Activated naive CD4-positive, alpha-beta T cell treated with anti-CD3 and anti-CD28 coated beads for 36 hours (primary cell): ENCODE measurements at regions of chrX and their contacts with region 1.

Region 1: DNA sequence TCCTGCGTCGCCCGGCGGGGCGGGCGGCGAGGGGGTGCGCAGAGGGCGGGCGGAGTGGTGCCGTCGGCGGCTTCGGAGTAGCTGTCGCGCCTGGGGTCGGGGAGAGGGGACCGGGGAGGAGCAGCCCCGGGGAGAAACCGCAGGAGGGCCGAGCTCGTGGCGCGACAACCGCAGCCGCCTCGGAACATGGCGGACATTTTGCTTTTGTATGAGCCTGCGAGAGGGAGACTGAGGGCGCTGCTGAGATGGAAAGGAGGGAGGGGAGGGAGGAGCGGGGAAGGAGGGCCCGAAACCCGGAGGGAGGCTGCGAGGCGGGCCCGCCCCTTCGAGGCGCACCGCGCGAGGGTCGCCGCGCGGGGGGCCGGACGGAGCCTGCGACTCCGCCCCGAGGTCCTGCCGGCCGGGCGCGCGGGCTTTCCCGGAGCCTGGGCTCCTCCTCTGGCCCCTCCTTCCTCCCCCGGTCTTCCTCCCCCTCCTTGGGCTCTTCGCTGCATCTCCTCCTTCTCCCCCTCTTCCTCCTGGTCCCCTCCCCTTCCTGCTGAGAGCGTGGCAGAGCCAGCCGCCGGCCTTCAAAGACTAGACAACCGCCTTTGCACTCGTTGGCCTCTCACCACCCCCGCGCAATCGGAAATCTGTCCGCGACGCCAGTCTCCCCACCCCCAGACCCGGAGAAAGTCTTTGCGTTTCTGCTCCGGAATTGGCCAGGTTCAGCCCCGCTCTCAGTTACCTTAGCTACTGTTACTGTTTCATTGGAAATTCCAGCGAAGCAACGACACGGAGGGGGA is 1.1 kb downstream of the INTS6L start:
- DNase-seq: peak; percentile 91
- H3K4me3 Mint-ChIP-seq: peak overlapping the region; percentile 97
- H3K27ac Mint-ChIP-seq: peak overlapping the region; percentile 97
- H3K4me1 Mint-ChIP-seq: peaks cover 38% of the 10 kb centered on the region
- H3K27me3 Mint-ChIP-seq: no peaks in the 10 kb centered on the region

Region 2: DNA sequence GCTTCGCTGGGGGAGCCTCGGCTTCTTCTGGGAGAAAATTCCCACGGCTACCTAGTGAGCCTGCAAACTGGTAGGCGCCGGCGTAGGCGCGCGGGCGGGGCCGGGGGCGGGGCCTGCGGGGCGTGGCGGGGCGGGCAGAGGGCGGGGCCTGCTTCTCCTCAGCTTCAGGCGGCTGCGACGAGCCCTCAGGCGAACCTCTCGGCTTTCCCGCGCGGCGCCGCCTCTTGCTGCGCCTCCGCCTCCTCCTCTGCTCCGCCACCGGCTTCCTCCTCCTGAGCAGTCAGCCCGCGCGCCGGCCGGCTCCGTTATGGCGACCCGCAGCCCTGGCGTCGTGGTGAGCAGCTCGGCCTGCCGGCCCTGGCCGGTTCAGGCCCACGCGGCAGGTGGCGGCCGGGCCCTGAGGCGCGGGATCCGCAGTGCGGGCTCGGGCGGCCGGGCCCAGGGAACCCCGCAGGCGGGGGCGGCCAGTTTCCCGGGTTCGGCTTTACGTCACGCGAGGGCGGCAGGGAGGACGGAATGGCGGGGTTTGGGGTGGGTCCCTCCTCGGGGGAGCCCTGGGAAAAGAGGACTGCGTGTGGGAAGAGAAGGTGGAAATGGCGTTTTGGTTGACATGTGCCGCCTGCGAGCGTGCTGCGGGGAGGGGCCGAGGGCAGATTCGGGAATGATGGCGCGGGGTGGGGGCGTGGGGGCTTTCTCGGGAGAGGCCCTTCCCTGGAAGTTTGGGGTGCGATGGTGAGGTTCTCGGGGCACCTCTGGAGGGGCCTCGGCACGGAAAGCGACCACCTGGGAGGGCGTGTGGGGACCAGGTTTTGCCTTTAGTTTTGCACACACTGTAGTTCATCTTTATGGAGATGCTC is 1061.4 kb before region 1 on chrX and contains the start of gene HPRT1:
- CTCF ChIA-PET with region 1: no interaction called
- intact Hi-C with region 1: loop called (anchors 5 kb)
- DNase-seq: peak; percentile 80
- H3K4me3 Mint-ChIP-seq: peak within 1 kb of the TSS; percentile 85
- H3K27ac Mint-ChIP-seq: peak within 1 kb of the TSS; percentile 85
- H3K4me1 Mint-ChIP-seq: peaks cover 7% of the 10 kb centered on the region
- H3K27me3 Mint-ChIP-seq: no peaks in the 10 kb centered on the region
- total RNA-seq, gene HPRT1: 111 TPM

Region 3: DNA sequence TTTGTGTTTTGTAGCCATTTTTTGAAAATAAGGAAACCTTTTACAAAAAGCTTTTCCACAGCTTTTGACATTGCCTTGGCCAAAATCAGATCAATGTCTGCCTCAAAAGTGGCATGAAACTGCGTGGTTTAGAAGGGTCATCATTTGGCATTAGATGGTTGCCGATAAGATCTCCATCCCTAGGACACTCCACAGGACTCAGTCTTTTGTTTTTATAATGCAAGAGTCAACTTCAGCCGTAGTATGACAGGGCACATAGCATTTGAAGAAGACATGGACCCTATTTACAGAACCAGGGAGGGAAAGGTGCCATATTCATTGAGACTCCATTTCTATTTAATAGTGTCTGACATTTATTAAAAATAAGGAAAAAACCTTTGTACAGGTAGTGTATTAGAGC is 471.0 kb before region 1 on chrX:
- CTCF ChIA-PET with region 1: no interaction called
- intact Hi-C with region 1: loop called (anchors 2 kb)
- DNase-seq: no peak
- H3K4me3 Mint-ChIP-seq: peak overlapping the region; percentile 87
- H3K27ac Mint-ChIP-seq: no peak overlapping the region
- H3K4me1 Mint-ChIP-seq: peaks cover 21% of the 10 kb centered on the region
- H3K27me3 Mint-ChIP-seq: no peaks in the 10 kb centered on the region

Region 4: DNA sequence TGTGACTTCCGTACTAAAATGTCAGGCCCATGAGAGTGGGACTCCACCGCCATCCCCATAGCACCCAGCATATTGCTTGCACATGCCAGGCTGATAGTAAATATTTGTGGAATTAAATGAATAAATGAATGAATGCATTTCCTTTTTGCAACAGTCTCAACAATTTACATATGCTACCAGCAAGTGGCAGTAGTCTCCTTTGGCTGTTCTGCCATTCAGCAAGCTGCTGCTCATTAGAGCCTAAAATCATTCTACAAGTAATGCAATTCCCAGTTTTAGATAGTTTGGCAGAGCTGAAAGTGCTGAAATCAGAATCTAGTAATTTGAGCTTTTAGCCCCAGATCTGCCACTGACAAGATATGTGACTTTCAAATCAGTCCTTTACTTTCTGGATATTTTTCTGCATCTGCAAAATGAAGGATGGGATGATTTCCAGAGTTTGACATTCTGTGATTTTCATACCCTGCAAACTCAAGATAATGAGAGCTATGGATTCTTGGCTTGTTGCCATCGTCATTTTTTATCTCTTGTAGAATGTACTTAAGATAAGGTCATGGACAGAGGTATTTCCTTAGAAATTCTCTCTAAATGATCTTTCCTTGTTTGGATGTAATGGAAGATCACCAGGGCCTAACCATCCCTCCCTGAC is 36.8 kb before region 1 on chrX:
- CTCF ChIA-PET with region 1: no interaction called
- intact Hi-C with region 1: loop called (anchors 1 kb)
- DNase-seq: peak; percentile 20
- H3K4me3 Mint-ChIP-seq: no peak overlapping the region
- H3K27ac Mint-ChIP-seq: no peak overlapping the region
- H3K4me1 Mint-ChIP-seq: peaks cover 3% of the 10 kb centered on the region
- H3K27me3 Mint-ChIP-seq: no peaks in the 10 kb centered on the region

Region 5: DNA sequence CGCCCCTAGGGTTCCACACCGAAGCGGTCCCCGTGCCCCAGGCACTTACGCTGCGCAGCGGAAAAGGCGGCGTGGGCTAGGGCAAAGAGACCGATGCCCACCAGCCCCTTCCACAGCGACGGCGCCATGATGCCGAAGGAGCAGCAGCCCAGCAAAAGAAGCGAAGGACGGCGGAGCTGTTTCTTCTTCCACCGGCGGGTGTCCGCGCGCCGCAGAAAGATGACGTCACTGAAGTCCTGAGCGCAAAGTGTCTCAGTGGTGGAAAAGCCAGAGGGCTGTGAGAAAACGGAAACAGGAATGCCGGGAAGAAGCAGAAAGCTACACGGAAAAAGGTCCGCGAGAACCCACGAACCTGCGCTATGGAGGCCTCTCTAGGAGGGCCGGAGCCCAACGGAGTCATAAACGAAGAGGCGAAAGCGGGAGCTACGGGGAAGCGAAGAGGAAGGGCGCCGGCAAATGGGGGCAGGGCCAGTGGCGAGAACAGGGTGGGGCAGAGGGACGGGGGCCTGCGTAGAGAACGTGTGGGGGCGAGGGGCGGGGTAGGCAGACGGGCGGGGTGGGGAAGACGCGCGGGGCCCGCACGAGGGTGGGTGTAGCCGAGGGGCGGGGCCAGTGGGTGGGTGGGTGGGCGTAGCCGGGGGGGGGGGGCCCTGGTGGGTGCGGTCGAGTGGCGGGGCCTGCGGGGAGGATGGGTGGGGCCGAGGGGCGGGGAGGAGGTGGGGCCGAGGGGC is 452.1 kb after region 1 on chrX and contains the start of gene MMGT1:
- CTCF ChIA-PET with region 1: no interaction called
- intact Hi-C with region 1: loop called (anchors 2 kb)
- DNase-seq: peak; percentile 84
- H3K4me3 Mint-ChIP-seq: peak within 1 kb of the TSS; percentile 95
- H3K27ac Mint-ChIP-seq: peak within 1 kb of the TSS; percentile 92
- H3K4me1 Mint-ChIP-seq: peaks cover 23% of the 10 kb centered on the region
- H3K27me3 Mint-ChIP-seq: no peaks in the 10 kb centered on the region
- total RNA-seq, gene MMGT1: 17.0 to 17.1 TPM